Astrocyte of the cerebellum (primary cell): ENCODE measurements at regions of chr9 and their contacts with region 1.

Region 1: DNA sequence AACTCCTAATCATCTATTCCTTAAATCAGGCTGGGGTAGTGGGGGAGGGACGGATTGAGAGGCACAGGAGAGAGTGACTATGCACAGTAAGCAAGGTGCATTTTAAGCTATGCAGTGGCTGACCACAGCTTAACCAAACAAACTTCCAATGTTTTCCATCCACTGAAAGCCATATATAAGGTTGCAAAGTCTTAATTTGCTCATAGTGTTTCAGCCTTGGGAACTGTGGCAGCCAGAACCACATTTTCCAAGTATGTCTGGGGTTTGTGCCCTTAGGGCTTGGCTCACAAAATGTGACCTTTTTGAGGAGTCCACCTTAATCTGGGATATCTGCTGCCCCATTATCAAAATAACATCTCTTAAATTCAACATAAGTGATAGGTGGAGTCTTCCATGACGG is 14.9 kb upstream of the UBQLN1 start:
- DNase-seq: no peak
- H3K4me3 ChIP-seq: no peak overlapping the region
- CTCF ChIP-seq: no peak

Region 2: DNA sequence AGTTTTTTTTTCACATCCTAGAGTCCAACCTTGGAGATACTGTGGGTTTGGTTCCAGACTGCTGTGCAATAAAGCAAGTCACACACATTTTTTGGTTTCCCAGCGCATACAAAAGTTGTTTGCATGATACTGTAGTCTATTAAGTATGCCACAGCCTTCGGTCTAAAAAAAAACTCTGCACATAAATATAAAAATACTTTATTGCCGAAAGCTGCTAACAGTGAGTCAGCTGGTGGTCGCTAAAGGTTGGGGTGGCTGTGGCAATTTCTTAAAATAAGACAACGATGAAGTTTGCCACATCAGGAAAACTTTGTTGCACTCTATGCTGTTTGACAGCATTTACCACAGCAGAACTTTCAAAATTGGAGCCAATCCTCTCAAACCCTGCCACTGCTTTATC is 52.3 kb before region 1 on chr9:
- in situ Hi-C with region 1: no loop called
- DNase-seq: no peak
- H3K4me3 ChIP-seq: no peak overlapping the region
- CTCF ChIP-seq: no peak

Region 3: GRCh38 chr9:83681490-83681889 is 41.2 kb before region 1 on chr9:
- in situ Hi-C with region 1: loop called (anchors 5 kb)
- DNase-seq: no peak
- H3K4me3 ChIP-seq: no peak overlapping the region
- CTCF ChIP-seq: no peak